Tibial artery (tissue), 4 donors: ENCODE measurements at regions of chr3 and their contacts with region 1.

Region 1: DNA sequence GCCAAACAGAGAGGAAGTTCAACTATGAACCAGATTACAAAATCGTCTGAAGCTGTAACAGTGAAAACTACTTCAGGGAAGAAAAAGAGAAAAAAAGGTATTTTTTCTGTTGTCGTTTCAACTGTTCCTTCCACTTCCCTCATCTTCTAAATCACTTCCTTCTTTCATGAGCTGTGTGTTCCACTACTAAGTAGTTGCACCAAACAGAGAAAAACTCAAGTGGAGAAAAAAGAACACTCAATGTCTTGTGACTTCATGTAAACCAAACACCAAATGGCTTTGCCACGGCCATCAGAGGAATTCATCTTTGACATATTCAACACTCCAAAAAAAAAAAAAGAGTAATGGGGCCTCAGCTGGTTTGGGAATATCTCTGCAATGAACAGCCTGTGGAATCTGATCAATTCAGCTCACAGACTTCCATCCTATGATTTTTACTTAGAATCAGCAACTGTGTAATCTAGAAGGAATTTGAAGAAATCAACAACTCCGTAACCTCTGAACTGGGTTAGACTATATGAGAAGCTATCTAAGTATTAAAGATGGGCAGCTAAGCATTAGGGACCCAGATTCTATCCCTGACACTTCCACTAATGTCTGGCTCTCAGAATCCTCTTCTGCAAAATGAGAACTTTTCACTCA is 47.5 kb upstream of the RNF7 start:
- DNase-seq: no peak
- H3K4me3 ChIP-seq: no peak overlapping the region
- H3K27ac ChIP-seq: no peak overlapping the region
- H3K4me1 ChIP-seq: peaks cover 0 to 9% (median 2%) of the 10 kb centered on the region in 4 donors
- H3K27me3 ChIP-seq: no peaks in the 10 kb centered on the region
- CTCF ChIP-seq: no peak

Region 2: GRCh38 chr3:141729240-141729639 is 38.7 kb after region 1 on chr3:
- intact Hi-C with region 1: loop called (anchors 2 kb)
- DNase-seq: no peak
- H3K4me3 ChIP-seq: no peak overlapping the region
- H3K27ac ChIP-seq: no peak overlapping the region
- H3K4me1 ChIP-seq: peaks cover 0 to 17% (median 0%) of the 10 kb centered on the region in 4 donors
- H3K27me3 ChIP-seq: no peaks in the 10 kb centered on the region
- CTCF ChIP-seq: no peak

Region 3: DNA sequence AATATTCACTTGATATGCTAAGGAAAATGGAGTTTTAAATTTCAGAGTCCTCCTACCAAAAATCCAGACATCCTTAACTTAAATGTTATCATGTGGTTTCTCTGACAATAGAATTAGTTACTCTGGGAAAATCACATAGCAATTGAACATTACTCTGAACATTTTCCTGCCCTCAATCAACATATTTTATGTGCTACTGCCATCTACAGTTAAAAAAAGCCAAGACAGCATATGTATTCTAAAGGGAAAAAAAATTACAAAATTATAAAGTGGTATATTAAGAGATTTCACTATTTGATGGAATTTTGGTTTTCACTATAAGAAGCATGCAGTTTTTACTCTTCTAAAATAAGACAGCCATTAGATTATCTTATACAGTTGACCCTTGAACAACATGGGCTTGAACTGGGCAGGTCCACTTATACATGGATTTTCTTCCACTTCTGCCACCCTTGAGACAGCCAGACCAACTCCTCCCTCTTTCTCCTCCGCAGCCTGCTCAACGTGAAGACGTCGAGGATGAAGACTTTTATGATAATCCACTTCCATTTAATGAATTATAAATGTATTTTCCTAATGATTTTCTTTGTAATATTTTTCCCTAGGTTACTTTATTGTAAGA is 308.2 kb after region 1 on chr3:
- intact Hi-C with region 1: no loop called
- DNase-seq: no peak
- H3K4me3 ChIP-seq: no peak overlapping the region
- H3K27ac ChIP-seq: no peak overlapping the region
- H3K4me1 ChIP-seq: peaks cover 0 to 22% (median 5%) of the 10 kb centered on the region in 4 donors
- H3K27me3 ChIP-seq: no peaks in the 10 kb centered on the region
- CTCF ChIP-seq: peak in 1 of 2 experiments; percentile 10